SK-N-SH (cell line): ENCODE measurements at regions of chr3 and their contacts with region 1.

Region 1: GRCh38 chr3:64685800-64686445 is 1.9 kb downstream of the ADAMTS9 start:
- DNase-seq: peak; percentile 84
- H3K4me3 ChIP-seq: peak overlapping the region; percentile 83 to 90
- H3K27ac ChIP-seq: peak overlapping the region; percentile 87 to 98
- H3K4me1 ChIP-seq: peaks cover 0 to 21% of the 10 kb centered on the region in 2 experiments; a peak in 3 of 4 replicates
- H3K27me3 ChIP-seq: no peaks in the 10 kb centered on the region
- CTCF ChIP-seq: peak; percentile 62
- EP300 ChIP-seq: peak in 1 of 2 experiments; percentile 51; a peak in 1 of 4 replicates
- RAD21 ChIP-seq: peak; percentile 66

Region 2: DNA sequence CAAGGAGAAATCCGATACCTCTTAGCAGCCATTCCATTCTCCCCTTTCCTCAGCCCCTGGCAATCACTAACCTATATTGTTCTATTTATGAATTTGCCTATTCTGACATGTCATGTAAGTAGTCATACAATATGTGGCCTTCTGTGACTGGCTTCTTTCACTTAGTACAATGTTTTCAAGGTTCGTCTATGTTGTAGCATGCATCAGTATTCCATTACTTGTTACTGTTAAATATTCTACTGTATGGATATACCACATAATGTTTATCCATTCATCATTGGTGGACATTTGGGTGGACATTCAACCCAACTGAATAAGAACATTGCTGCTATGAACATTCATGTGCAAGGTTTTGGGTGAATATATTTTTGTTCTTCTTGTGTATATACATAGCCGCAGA is 21.5 kb before region 1 on chr3:
- CTCF ChIA-PET with region 1: no interaction called
- POLR2A ChIA-PET with region 1: no interaction called
- DNase-seq: no peak
- H3K4me3 ChIP-seq: no peak overlapping the region
- H3K27ac ChIP-seq: no peak overlapping the region
- H3K4me1 ChIP-seq: peaks cover 0 to 26% of the 10 kb centered on the region in 2 experiments; a peak in 2 of 4 replicates
- H3K27me3 ChIP-seq: no peaks in the 10 kb centered on the region
- CTCF ChIP-seq: no peak
- EP300 ChIP-seq: no peak
- RAD21 ChIP-seq: no peak

Region 3: GRCh38 chr3:64856106-64856505 is 170.2 kb after region 1 on chr3:
- CTCF ChIA-PET with region 1: no interaction called
- POLR2A ChIA-PET with region 1: interaction called, 17 read pairs
- DNase-seq: no peak
- H3K4me3 ChIP-seq: no peak overlapping the region
- H3K27ac ChIP-seq: peak overlapping the region in 1 of 2 experiments; percentile 100; a peak in 2 of 4 replicates
- H3K4me1 ChIP-seq: peaks cover 0 to 45% of the 10 kb centered on the region in 2 experiments; a peak in 3 of 4 replicates
- H3K27me3 ChIP-seq: no peaks in the 10 kb centered on the region
- CTCF ChIP-seq: no peak
- EP300 ChIP-seq: no peak
- RAD21 ChIP-seq: no peak

Region 4: GRCh38 chr3:65170390-65171042 is 484.6 kb after region 1 on chr3:
- CTCF ChIA-PET with region 1: interaction called, 11 read pairs
- POLR2A ChIA-PET with region 1: interaction called, 5 read pairs
- DNase-seq: peak; percentile 43
- H3K4me3 ChIP-seq: no peak overlapping the region
- H3K27ac ChIP-seq: peak overlapping the region in 1 of 2 experiments; percentile 86; a peak in 2 of 4 replicates
- H3K4me1 ChIP-seq: peaks cover 0 to 18% of the 10 kb centered on the region in 2 experiments; a peak in 2 of 4 replicates
- H3K27me3 ChIP-seq: no peaks in the 10 kb centered on the region
- CTCF ChIP-seq: peak; percentile 66
- EP300 ChIP-seq: peak in 1 of 2 experiments; percentile 53; a peak in 1 of 4 replicates
- RAD21 ChIP-seq: peak; percentile 88

Region 5: DNA sequence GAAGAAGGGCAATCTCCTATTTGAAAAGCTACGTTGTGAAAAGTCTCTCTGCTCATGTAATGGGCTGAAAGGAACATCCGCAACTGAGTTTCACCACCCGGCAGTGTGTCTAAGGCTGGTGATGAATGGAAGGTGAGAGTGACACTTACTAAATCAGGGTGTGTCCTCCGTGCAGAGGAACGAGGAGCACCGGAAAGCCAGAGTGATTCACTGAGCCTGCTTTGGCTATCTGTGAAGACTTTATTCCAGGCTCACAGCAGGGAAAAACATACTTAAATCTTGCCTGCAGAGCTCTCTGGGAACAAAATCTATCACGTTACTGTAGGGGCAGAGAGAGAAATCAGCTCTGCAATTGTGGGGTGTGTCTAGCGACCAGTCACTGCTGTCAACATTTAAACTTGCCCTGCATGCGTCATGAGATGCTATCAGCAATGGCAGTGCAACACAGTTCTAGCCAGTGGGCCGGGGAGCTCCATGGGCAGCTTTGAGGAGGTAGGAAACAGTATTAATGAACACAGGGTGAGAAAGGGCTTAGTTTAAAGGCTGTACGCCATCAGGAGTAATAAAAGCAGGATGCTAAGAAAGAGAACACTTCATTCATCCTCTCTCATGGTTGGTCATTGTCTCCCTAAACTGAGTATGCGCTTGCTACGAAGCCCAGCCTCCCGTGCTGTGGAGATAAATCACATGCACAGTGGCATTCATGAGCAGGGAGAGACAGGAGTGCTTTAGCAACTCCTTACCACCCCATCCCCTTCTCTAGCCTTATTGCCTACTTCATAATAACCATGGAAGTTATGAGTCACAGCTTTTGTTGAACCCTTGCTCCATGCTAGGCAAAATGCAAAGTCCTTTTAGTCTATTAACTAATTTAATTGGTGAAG is 544.6 kb after region 1 on chr3:
- CTCF ChIA-PET with region 1: no interaction called
- POLR2A ChIA-PET with region 1: interaction called, 11 read pairs
- DNase-seq: no peak
- H3K4me3 ChIP-seq: no peak overlapping the region
- H3K27ac ChIP-seq: peak overlapping the region in 1 of 2 experiments; percentile 99; a peak in 3 of 4 replicates
- H3K4me1 ChIP-seq: peaks cover 0 to 49% of the 10 kb centered on the region in 2 experiments; a peak in 2 of 4 replicates
- H3K27me3 ChIP-seq: no peaks in the 10 kb centered on the region
- CTCF ChIP-seq: no peak
- EP300 ChIP-seq: no peak
- RAD21 ChIP-seq: no peak